ENCODE measurements at regions of chr5 and their contacts with region 1.

Region 1: GRCh38 chr5:122415030-122415800 is 103.2 kb downstream of the SNCAIP start:
- DNase-seq: peak; percentile 66 to 70
- H3K4me3 ChIP-seq: no peak overlapping the region
- H3K27ac ChIP-seq: peak overlapping the region in 1 of 2 donors; percentile 5
- H3K4me1 ChIP-seq: no peaks in the 10 kb centered on the region
- H3K27me3 ChIP-seq: no peaks in the 10 kb centered on the region
- CTCF ChIP-seq: peak; percentile 75 to 84 (median 77)
- POLR2A ChIP-seq: no peak

Region 2: GRCh38 chr5:122151640-122152039 is 263.6 kb before region 1 on chr5:
- intact Hi-C with region 1: no loop called
- DNase-seq: no peak
- H3K4me3 ChIP-seq: no peak overlapping the region
- H3K27ac ChIP-seq: no peak overlapping the region
- H3K4me1 ChIP-seq: no peaks in the 10 kb centered on the region
- H3K27me3 ChIP-seq: no peaks in the 10 kb centered on the region
- CTCF ChIP-seq: no peak
- POLR2A ChIP-seq: no peak

Region 3: GRCh38 chr5:122195784-122196394 is 219.3 kb before region 1 on chr5:
- intact Hi-C with region 1: loop called (anchors 5 kb)
- DNase-seq: peak; percentile 25 to 47
- H3K4me3 ChIP-seq: no peak overlapping the region
- H3K27ac ChIP-seq: no peak overlapping the region
- H3K4me1 ChIP-seq: no peaks in the 10 kb centered on the region
- H3K27me3 ChIP-seq: no peaks in the 10 kb centered on the region
- CTCF ChIP-seq: peak; percentile 65 to 72 (median 70)
- POLR2A ChIP-seq: no peak

Region 4: DNA sequence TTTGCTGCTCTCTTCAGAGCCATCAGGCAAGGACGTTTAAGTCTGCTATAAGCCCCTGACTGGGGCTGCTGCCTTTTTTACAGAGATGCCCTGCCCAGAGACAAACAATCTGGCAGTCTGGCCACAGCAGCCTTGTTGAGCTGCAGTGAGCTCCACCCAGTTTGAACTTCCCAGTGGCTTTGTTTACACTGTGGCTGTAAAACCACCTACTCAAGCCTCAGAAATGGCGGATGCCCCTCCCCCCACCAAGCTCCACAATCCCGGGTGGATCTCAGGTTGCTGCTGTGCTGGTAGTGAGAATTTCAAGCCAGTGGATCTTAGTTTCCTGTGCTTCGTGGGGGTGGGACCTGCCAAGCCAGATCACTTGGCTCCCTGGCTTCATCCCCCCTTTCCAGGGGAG is 162.9 kb before region 1 on chr5:
- intact Hi-C with region 1: no loop called
- DNase-seq: no peak
- H3K4me3 ChIP-seq: no peak overlapping the region
- H3K27ac ChIP-seq: no peak overlapping the region
- H3K4me1 ChIP-seq: no peaks in the 10 kb centered on the region
- H3K27me3 ChIP-seq: no peaks in the 10 kb centered on the region
- CTCF ChIP-seq: no peak
- POLR2A ChIP-seq: no peak

Region 5: GRCh38 chr5:122507581-122507980 is 92.4 kb after region 1 on chr5:
- intact Hi-C with region 1: no loop called
- DNase-seq: no peak
- H3K4me3 ChIP-seq: no peak overlapping the region
- H3K27ac ChIP-seq: no peak overlapping the region
- H3K4me1 ChIP-seq: no peaks in the 10 kb centered on the region
- H3K27me3 ChIP-seq: no peaks in the 10 kb centered on the region
- CTCF ChIP-seq: no peak
- POLR2A ChIP-seq: no peak

Measured in uterus (tissue), 4 donors.